GM13976 (cell line): ENCODE measurements at regions of chr14 and their contacts with region 1.

Region 1: DNA sequence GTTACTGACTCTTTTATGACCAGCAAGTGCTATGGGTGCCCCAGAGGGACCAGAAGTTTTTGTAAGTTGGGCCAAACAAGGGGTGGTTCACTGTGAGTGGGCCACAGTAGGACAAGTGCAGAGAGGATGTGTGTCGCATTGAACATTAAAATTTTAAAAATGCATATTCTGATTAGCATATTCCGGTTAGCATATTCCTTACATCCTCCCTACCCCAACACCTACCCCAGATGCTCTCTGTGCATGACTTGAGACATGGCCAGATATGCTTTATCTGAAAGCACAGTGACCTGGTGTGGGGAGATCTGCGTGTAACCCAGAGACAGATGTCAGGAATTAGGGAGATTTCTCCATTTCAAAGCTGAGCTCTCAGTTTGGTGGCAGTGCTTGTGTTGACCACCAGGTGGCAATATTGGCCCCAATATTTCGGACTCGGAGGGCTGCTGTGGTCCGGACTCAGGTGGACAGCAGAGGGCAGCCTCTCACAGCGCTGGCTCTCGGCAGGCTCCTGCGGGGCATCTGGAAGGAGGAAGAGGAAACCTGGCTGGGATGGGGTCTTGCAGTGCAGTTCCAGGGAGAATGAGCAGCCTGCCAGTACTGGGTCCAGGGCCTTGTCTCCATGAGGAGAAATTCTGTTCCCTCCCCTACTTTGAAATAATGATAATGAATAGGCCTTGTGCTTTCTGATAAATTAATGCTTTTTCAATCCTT is 1.6 kb upstream of the CEBPE start:
- DNase-seq: peak; percentile 92
- CTCF ChIP-seq: peak; percentile 100

Region 2: GRCh38 chr14:22472935-22473854 is 647.5 kb before region 1 on chr14:
- in situ Hi-C with region 1: no loop called
- DNase-seq: peak; percentile 75
- CTCF ChIP-seq: peak; percentile 61

Region 3: GRCh38 chr14:22929104-22929847 is 191.4 kb before region 1 on chr14 and contains the start of gene PRMT5:
- in situ Hi-C with region 1: no loop called
- DNase-seq: peak; percentile 94
- CTCF ChIP-seq: no peak

Region 4: DNA sequence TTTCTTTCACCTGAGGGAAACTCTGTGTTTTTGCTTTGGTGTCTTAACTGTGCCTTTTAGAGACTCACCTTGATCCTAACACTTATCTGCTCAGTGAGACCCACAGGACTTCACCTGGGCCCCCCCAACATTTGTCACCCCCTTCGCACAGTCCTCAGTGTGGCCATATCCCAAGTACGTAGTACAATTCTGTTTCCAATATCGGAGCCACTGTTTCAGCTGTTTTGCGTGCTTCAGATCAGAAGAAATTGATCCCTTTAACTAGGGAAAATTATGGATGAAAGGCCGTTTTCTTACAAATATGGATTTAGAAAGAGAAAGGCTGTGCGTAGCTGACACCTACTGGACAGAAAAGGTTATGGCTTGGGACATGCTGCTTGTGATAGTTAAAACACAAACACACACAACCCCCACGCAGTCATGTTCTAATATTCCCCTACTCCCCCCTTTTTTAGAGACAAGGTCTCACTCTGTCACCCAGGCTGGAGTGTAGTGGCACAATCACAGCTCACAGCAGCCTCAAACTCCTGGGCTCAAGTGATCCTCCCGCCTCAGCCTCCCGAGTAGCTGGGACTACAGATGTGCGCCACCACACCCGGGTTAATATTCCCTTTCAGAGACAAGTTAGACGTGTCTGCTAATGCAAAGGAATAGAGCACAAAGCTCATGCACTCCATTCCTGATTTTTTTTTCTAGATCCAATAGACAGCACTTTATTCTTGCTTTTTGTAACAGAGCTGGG is 66.4 kb after region 1 on chr14:
- in situ Hi-C with region 1: loop called (anchors 10 kb)
- DNase-seq: peak; percentile 64
- CTCF ChIP-seq: peak; percentile 54

Region 5: GRCh38 chr14:23294734-23295561 is 174.3 kb after region 1 on chr14:
- in situ Hi-C with region 1: loop called (anchors 10 kb)
- DNase-seq: peak; percentile 45
- CTCF ChIP-seq: peak; percentile 65